ENCODE measurements at regions of chr17 and their contacts with region 1.

Region 1: GRCh38 chr17:39153599-39154051 is 2.2 kb upstream of the PLXDC1 start:
- DNase-seq: peak; percentile 86
- H3K4me3 Mint-ChIP-seq: peak overlapping the region; percentile 100
- H3K27ac Mint-ChIP-seq: peak overlapping the region; percentile 94
- H3K4me1 Mint-ChIP-seq: peaks cover 17% of the 10 kb centered on the region
- H3K27me3 Mint-ChIP-seq: peaks cover 9% of the 10 kb centered on the region
- CTCF ChIP-seq: no peak

Region 2: GRCh38 chr17:38674749-38675615 is 478.6 kb before region 1 on chr17 and contains the start of gene EPOP:
- CTCF ChIA-PET with region 1: no interaction called
- POLR2A ChIA-PET with region 1: no interaction called
- intact Hi-C with region 1: loop called (anchors 10 kb)
- DNase-seq: peak; percentile 82
- H3K4me3 Mint-ChIP-seq: peak within 1 kb of the TSS; percentile 64
- H3K27ac Mint-ChIP-seq: no peak within 1 kb of the TSS
- H3K4me1 Mint-ChIP-seq: peaks cover 13% of the 10 kb centered on the region
- H3K27me3 Mint-ChIP-seq: peaks cover 2% of the 10 kb centered on the region
- CTCF ChIP-seq: no peak
- total RNA-seq, gene EPOP: 3.4 and 3.6 TPM in 2 replicates

Region 3: DNA sequence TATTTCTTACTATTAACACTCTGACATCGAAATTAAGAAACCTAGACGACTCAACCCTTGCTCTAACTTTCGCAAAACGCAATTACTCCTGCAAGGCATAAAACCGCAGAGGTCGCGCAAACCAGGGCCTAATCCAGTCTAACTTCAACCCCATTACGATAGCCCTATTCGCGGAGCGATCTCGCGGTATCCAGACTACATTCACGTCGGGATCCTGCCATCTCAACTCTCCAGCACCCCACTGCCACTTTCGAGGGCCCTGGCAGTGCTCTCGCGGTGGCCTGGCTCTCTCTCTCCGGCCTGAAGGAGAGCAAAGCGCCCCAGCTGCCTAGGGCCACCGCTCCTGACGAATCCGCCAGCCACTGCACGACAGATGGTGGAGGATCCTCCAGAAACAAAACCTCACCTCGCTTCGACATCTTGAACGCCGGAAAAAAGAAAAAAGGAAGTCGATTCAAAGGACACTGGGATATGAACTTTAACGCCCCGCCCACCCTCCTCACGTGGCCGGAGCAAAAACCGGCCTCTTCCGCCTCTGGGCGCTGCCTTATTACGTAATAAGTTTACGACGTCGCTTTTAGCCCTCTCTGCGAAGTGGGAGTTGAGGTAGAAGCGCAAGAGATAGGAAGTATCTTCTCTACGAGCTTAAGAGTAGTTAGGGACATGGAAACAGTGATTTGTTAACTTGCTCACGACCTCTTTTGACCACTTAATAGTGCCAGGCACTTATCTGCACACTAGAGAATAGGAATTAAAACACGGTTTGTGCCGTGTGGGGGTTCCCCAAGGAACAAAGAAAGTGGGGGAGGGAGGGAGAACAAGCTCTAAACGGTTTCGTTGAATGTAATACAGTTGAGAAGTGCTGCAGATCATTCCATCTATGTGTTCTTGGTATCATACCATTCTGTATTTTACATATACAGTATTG is 300.1 kb before region 1 on chr17 and contains the start of gene RPL23:
- CTCF ChIA-PET with region 1: no interaction called
- POLR2A ChIA-PET with region 1: interaction called, 15 read pairs
- intact Hi-C with region 1: loop called (anchors 5 kb)
- DNase-seq: peak; percentile 97
- H3K4me3 Mint-ChIP-seq: peak within 1 kb of the TSS; percentile 99
- H3K27ac Mint-ChIP-seq: peak within 1 kb of the TSS; percentile 100
- H3K4me1 Mint-ChIP-seq: peaks cover 15% of the 10 kb centered on the region
- H3K27me3 Mint-ChIP-seq: no peaks in the 10 kb centered on the region
- CTCF ChIP-seq: no peak
- total RNA-seq, gene RPL23: 1,891 and 2,060 TPM in 2 replicates

Region 4: GRCh38 chr17:38982858-38983746 is 170.5 kb before region 1 on chr17:
- CTCF ChIA-PET with region 1: interaction called, 114 read pairs
- POLR2A ChIA-PET with region 1: interaction called, 37 read pairs
- intact Hi-C with region 1: loop called (anchors 1 kb)
- DNase-seq: peak; percentile 68
- H3K4me3 Mint-ChIP-seq: no peak overlapping the region
- H3K27ac Mint-ChIP-seq: no peak overlapping the region
- H3K4me1 Mint-ChIP-seq: no peaks in the 10 kb centered on the region
- H3K27me3 Mint-ChIP-seq: no peaks in the 10 kb centered on the region
- CTCF ChIP-seq: peak; percentile 92

Region 5: DNA sequence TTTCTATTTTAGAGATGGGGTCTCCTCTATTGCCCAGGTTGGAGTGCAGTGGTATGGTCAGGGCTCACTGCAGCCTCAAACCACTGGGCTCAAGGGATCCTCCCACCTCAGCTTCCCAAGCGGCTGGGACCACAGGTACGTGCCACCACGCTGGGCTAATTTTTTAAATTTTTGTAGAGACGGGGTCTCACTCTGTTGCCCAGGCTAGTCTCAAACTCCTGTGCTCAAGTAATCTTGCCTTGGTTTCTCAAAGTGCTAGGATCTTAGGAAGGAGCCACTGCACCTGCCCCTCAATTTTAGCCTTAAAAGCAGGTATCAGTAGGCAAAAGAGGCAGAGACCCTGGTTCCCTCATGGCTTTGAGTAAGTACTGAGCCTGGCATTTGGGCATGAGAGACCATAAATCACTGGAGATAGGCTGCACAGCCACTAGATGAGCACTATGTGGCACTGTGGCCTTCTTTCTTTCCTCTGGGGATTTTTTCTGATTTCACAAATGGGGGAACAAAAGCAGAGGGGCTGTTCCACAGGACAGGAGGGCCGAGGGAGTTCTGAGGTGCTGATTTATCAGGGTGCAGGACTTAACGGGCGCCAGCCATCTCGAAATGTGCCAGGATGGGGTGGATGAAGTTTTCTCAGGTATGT is 84.4 kb before region 1 on chr17:
- CTCF ChIA-PET with region 1: interaction called, 24 read pairs
- POLR2A ChIA-PET with region 1: interaction called, 3 read pairs
- intact Hi-C with region 1: loop called (anchors 1 kb)
- DNase-seq: peak; percentile 55
- H3K4me3 Mint-ChIP-seq: no peak overlapping the region
- H3K27ac Mint-ChIP-seq: no peak overlapping the region
- H3K4me1 Mint-ChIP-seq: peaks cover 10% of the 10 kb centered on the region
- H3K27me3 Mint-ChIP-seq: peaks cover 10% of the 10 kb centered on the region
- CTCF ChIP-seq: peak; percentile 49

Region 6: DNA sequence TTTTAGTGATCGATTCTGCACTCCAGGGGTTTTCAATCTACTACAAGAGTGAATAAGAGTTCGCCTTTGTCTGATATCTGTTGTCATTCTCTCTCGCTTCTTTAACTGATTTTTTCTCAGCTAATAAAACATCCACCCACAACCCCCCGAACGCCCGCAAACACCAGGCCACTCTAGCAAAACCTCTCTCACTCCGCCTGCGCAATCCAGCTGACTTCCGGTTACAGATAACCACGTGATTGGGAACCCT is 46.1 kb after region 1 on chr17:
- CTCF ChIA-PET with region 1: interaction called, 5 read pairs
- POLR2A ChIA-PET with region 1: interaction called, 35 read pairs
- intact Hi-C with region 1: no loop called
- DNase-seq: peak; percentile 95
- H3K4me3 Mint-ChIP-seq: peak overlapping the region; percentile 90
- H3K27ac Mint-ChIP-seq: peak overlapping the region; percentile 100
- H3K4me1 Mint-ChIP-seq: peaks cover 22% of the 10 kb centered on the region
- H3K27me3 Mint-ChIP-seq: no peaks in the 10 kb centered on the region
- CTCF ChIP-seq: no peak

Region 7: GRCh38 chr17:39244600-39245570 is 91.3 kb after region 1 on chr17:
- CTCF ChIA-PET with region 1: interaction called, 14 read pairs
- POLR2A ChIA-PET with region 1: interaction called, 5 read pairs
- intact Hi-C with region 1: no loop called
- DNase-seq: peak; percentile 86
- H3K4me3 Mint-ChIP-seq: no peak overlapping the region
- H3K27ac Mint-ChIP-seq: no peak overlapping the region
- H3K4me1 Mint-ChIP-seq: no peaks in the 10 kb centered on the region
- H3K27me3 Mint-ChIP-seq: no peaks in the 10 kb centered on the region
- CTCF ChIP-seq: peak; percentile 92

Region 8: GRCh38 chr17:39294060-39294459 is 140.4 kb after region 1 on chr17:
- CTCF ChIA-PET with region 1: no interaction called
- POLR2A ChIA-PET with region 1: no interaction called
- intact Hi-C with region 1: no loop called
- DNase-seq: no peak
- H3K4me3 Mint-ChIP-seq: no peak overlapping the region
- H3K27ac Mint-ChIP-seq: no peak overlapping the region
- H3K4me1 Mint-ChIP-seq: no peaks in the 10 kb centered on the region
- H3K27me3 Mint-ChIP-seq: no peaks in the 10 kb centered on the region
- CTCF ChIP-seq: no peak